ENCODE measurements at regions of chr20 and their contacts with region 1.

Region 1: DNA sequence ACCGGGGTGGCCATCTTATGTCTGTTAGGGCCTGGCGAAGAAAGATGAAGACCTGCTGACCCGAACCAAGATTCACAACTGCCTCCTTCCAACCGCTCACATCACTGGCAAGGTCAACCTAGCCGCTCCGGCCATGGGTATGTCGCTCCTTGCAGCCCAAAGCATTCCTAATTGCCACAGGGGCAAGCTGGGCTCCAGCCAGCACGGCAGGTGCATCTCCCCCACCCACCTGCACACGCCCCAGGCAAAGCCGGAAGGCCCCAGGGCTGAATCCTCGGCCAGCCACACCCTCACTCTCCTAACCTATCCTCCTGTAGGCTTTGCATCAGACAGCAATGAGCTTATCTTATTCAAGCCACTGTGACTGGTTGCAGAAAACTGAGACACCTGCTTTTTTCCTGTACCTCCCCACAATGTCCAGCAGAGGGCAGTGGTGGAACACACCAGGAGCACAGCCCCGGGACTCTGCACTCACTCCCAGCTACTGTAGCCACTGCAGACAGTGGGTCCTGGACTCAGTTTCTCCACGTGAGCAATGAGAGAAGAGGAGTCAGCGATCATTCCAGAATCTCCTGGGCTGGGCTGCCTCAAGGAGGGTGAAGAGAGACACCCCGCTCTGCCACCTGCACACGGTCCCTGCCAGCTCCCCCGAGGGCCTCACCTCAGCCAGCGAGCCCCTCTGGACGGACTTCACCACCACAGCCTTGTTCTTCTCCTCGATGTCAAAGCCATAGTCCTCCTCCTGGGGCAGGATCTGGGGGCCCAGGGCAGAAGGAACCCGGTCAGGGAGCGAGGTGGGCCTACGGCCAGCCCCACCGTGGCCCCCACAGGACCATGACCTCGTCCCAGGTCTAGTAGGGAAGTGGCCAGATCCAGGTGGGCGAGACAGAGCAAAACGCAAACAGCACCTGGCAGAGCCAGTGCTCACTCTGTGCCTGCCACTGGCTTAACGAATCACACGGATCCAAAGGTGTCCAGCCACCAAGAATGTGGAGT is 170.0 kb downstream of the PREX1 start:
- H3K4me3 Mint-ChIP-seq: no peak overlapping the region
- H3K27ac Mint-ChIP-seq: peak overlapping the region; percentile 54
- H3K4me1 Mint-ChIP-seq: peaks cover 14% of the 10 kb centered on the region
- H3K27me3 Mint-ChIP-seq: no peaks in the 10 kb centered on the region

Region 2: GRCh38 chr20:48609491-48609978 is 48.2 kb before region 1 on chr20:
- intact Hi-C with region 1: no loop called
- H3K4me3 Mint-ChIP-seq: no peak overlapping the region
- H3K27ac Mint-ChIP-seq: no peak overlapping the region
- H3K4me1 Mint-ChIP-seq: peaks cover 8% of the 10 kb centered on the region
- H3K27me3 Mint-ChIP-seq: peaks cover 17% of the 10 kb centered on the region

Region 3: DNA sequence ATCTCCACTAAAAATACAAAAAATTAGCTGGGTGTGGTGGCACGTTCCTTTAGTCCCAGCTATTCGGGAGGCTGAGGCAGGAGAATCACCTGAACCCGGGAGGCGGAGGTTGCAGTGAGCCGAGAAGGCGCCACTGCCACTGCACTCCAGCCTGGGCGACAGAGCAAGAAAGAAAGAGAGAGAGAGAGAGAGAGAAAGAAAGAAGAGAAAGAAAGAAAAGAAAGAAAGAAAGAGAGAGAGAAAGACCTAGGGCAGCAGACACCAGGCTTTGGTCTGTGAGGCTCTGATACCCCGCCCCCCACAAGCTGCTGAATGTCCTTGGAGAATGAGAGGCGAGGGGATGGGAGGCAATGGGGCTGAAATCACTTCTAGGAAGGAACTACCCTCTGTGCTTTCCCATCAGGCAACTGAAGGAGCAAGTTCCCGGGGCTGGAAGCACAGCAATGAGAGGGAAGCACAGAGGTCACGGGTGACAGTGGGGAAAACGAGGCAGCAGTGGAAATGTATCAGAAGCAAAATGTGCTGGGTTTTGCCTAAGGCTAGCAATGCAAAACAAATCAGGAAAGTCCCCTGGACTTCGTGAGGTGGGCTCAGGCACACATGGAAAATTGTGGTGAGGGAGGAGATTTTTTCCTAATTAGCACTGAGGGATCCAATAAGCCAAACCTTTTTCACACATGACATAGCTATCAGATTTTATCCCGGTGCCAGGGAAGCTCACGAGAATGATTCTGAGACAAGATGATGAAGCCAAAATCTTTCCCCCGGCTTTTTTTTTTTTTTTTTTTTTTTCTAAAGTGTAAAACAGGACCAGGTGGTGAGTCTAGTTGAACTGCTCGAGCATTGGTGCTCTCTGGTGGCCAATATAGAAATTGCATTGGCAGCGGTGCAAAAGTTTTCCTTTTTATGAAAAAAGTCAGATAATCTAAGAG is 246.9 kb after region 1 on chr20:
- intact Hi-C with region 1: loop called (anchors 1 kb)
- H3K4me3 Mint-ChIP-seq: no peak overlapping the region
- H3K27ac Mint-ChIP-seq: peak overlapping the region; percentile 20
- H3K4me1 Mint-ChIP-seq: peaks cover 60% of the 10 kb centered on the region
- H3K27me3 Mint-ChIP-seq: no peaks in the 10 kb centered on the region